ENCODE measurements at regions of chr12 and their contacts with region 1.

Region 1: GRCh38 chr12:75877763-75878621 is 153.6 kb downstream of the PHLDA1 start:
- DNase-seq: no peak
- ATAC-seq: peak; percentile 23; the same call in 2 of the 3 replicates
- H3K4me3 ChIP-seq: no peak overlapping the region
- H3K27ac ChIP-seq: no peak overlapping the region
- H3K4me1 ChIP-seq: no peaks in the 10 kb centered on the region
- H3K27me3 ChIP-seq: no peaks in the 10 kb centered on the region
- CTCF ChIP-seq: no peak
- EP300 ChIP-seq: no peak
- POLR2A ChIP-seq: no peak
- RAD21 ChIP-seq: no peak

Region 2: DNA sequence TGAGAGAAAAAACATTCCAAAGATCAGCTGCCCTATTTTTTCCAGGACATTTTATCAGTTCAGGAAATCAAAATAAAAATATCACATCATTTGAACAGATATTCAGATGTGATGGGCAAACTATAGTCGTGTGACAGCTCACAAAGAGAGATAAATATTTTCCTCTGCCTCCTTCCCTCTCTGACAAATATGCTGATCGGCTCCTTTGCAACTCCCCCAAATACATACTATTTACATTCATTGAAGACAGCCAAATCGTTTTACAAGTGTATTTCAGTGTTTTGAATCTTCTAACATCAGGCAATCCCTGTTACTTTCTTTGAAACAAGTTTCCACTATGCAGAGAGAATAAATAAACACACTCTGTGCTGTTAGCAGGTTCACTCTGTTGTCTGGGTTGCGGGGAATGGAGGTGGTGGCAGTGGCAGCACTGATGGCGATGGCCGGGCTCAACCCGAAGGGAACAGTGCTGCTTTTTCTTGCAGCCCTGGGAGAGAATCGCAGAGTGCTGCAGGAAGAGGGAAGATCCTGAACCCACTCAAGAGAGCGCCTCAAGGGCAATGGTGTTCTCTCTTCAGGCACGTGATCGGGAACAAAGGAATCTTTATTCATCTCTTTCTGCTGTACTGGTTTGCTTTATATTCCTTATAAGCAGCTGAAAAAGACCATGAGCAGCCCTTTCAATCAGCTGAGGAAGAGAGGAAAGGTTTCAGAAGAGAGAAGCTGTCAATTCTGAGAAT is 11.1 kb after region 1 on chr12:
- CTCF ChIA-PET with region 1: interaction called, 12 read pairs
- POLR2A ChIA-PET with region 1: no interaction called
- RAD21 ChIA-PET with region 1: no interaction called
- SMC1A ChIA-PET with region 1: interaction called, 4 read pairs
- in situ Hi-C with region 1: no loop called
- intact Hi-C with region 1: no loop called
- DNase-seq: no peak
- ATAC-seq: no peak
- H3K4me3 ChIP-seq: no peak overlapping the region
- H3K27ac ChIP-seq: no peak overlapping the region
- H3K4me1 ChIP-seq: no peaks in the 10 kb centered on the region
- H3K27me3 ChIP-seq: no peaks in the 10 kb centered on the region
- CTCF ChIP-seq: no peak
- EP300 ChIP-seq: no peak
- POLR2A ChIP-seq: no peak
- RAD21 ChIP-seq: no peak

Measured in GM12878 (cell line).